ENCODE measurements at regions of chr21 and their contacts with region 1.

Region 1: GRCh38 chr21:34888569-34889319 is 160.4 kb downstream of the RUNX1 start:
- DNase-seq: peak; percentile 78 to 94 (median 94)
- H3K4me3 ChIP-seq: peak overlapping the region; percentile 47 to 99 (median 87)
- H3K27ac ChIP-seq: peak overlapping the region; percentile 83 to 95
- H3K4me1 ChIP-seq: peaks cover 35 to 80% (median 42%) of the 10 kb centered on the region in 4 experiments
- H3K27me3 ChIP-seq: no peaks in the 10 kb centered on the region

Region 2: DNA sequence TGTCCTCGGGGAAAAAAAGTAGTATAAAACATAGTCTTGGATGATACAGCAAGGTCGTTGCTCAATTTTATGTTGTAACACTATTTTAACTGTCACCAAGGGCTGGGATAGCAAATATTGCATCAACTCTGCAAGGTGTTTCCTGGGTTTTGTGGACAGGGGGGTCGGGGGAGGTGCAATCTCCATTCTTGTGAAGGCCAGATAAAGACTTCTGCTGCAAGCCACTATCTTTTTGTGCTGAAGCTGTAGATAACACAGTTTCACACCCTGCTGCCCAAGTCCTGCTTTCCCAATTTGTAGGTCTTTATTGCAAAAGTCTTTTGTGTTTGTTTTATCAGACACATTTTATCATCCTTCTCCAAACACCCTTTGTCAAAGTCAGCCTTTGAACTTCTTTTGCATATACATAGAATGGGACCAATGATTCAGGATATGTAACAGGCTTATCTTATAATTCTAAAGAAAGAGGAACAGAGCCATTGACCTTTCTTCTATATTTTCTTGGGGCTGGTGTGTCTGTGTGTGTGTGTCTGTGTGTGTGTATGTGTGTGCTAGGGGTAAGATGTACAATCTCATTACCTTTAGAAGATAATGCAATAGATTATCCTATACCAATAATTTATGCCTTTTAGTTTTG is 19.8 kb after region 1 on chr21:
- CTCF ChIA-PET with region 1: interaction called, 36 read pairs
- POLR2A ChIA-PET with region 1: interaction called, 14 read pairs
- DNase-seq: peak; percentile 97 to 99 (median 99)
- H3K4me3 ChIP-seq: peak overlapping the region in 4 of 7 experiments; percentile 27 to 68 (median 63)
- H3K27ac ChIP-seq: peak overlapping the region; percentile 94 to 99
- H3K4me1 ChIP-seq: peaks cover 70 to 98% (median 84%) of the 10 kb centered on the region in 4 experiments
- H3K27me3 ChIP-seq: no peaks in the 10 kb centered on the region

Region 3: DNA sequence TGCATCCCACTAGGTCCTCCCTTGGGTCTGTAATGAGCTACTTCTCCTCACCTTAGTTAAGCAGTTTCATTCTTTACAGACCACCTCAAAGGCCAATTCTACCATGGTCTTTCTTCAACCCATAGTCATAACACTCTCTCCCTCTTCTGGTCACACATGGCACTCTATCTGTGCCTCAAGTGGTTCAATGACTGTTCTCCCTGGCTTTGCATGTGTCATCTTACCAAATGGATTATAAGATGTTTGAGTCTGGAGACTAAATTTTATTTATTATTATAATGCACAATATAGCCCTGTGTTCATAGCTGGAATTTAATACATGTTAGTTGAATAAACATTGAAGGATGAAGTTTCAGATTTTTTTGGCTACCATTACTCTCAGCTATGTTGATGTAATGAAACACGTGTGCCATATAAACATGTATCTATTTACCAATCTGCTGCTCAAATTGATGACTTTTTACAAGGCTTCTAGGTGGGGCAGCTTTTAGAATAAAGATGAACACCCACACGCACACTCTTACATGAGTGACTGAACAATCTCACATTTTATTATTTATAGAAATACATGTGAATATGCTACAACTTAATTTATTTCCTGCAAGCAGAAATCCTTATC is 58.3 kb after region 1 on chr21:
- CTCF ChIA-PET with region 1: interaction called, 21 read pairs
- POLR2A ChIA-PET with region 1: interaction called, 9 read pairs
- DNase-seq: peak; percentile 38 to 74 (median 60)
- H3K4me3 ChIP-seq: no peak overlapping the region
- H3K27ac ChIP-seq: peak overlapping the region in 1 of 2 experiments; percentile 67
- H3K4me1 ChIP-seq: peaks cover 12 to 76% (median 66%) of the 10 kb centered on the region in 4 experiments
- H3K27me3 ChIP-seq: no peaks in the 10 kb centered on the region

Region 4: GRCh38 chr21:34960672-34961071 is 71.9 kb after region 1 on chr21:
- CTCF ChIA-PET with region 1: interaction called, 11 read pairs
- POLR2A ChIA-PET with region 1: no interaction called
- DNase-seq: no peak
- H3K4me3 ChIP-seq: no peak overlapping the region
- H3K27ac ChIP-seq: no peak overlapping the region
- H3K4me1 ChIP-seq: peaks cover 0 to 28% (median 10%) of the 10 kb centered on the region in 4 experiments
- H3K27me3 ChIP-seq: no peaks in the 10 kb centered on the region

Region 5: GRCh38 chr21:35020902-35021301 is 132.2 kb after region 1 on chr21:
- CTCF ChIA-PET with region 1: interaction called, 12 read pairs
- POLR2A ChIA-PET with region 1: interaction called, 51 read pairs
- DNase-seq: no peak
- H3K4me3 ChIP-seq: no peak overlapping the region
- H3K27ac ChIP-seq: peak overlapping the region; percentile 25 to 35
- H3K4me1 ChIP-seq: peaks cover 32 to 86% (median 50%) of the 10 kb centered on the region in 4 experiments
- H3K27me3 ChIP-seq: no peaks in the 10 kb centered on the region

Region 6: GRCh38 chr21:35026617-35027562 is 138.1 kb after region 1 on chr21:
- CTCF ChIA-PET with region 1: interaction called, 12 read pairs
- POLR2A ChIA-PET with region 1: interaction called, 51 read pairs
- DNase-seq: peak; percentile 98 to 100 (median 99)
- H3K4me3 ChIP-seq: peak overlapping the region in 6 of 7 experiments; percentile 33 to 66 (median 43)
- H3K27ac ChIP-seq: peak overlapping the region; percentile 90 to 93
- H3K4me1 ChIP-seq: peaks cover 33 to 89% (median 71%) of the 10 kb centered on the region in 4 experiments
- H3K27me3 ChIP-seq: no peaks in the 10 kb centered on the region